Endothelial cell of umbilical vein (primary cell): ENCODE measurements at regions of chr9 and their contacts with region 1.

Region 1: GRCh38 chr9:127049044-127049443 is 73.4 kb downstream of the ANGPTL2 start:
- DNase-seq: peak; percentile 98
- H3K4me3 ChIP-seq: no peak overlapping the region
- H3K27ac ChIP-seq: peak overlapping the region; percentile 80
- H3K4me1 ChIP-seq: peaks cover 40% of the 10 kb centered on the region
- H3K27me3 ChIP-seq: no peaks in the 10 kb centered on the region
- CTCF ChIP-seq: peak; percentile 19 to 22
- POLR2A ChIP-seq: peak; percentile 58

Region 2: DNA sequence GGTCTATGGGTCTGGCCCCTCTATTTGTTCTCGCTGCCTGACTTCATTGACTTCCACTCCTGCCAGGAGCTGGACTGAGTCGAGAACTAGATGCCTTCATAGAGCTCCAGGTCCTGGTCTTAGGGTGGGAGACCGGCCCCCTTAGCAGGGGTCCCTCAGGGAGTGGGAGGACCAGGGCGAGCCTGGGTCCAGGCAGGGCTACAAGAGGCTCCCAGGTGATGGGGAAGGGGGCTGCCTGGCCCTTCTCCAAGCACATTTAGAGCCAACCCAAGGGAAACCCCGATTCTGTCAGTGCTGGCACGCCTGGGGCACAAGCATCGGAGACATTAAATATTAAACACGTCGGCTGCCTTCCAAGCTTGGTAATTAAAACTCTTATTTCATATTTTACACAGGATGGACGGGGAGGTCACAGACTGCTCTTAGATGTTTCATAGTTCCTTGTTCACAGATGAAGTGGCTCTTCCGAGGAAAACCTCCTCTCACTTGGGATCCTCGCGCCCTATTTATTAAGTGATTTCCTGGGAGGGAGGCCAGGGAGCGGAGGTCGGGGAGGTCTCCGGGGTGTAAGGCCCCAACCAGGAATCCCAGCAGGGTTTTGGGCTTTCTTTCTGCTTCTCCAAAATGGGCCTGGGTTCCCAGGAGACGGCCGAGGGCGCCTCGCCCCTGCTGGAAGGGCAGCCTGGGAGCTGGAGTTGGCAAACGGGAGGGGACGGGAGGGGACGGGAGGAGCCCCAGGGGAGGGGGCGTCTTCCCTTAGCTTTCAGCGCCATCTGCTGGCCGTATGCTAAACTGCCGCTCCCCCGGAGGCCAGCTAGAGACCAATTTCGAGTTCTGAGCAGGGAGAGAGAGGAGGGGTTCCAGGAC is 267.6 kb before region 1 on chr9:
- CTCF ChIA-PET with region 1: no interaction called
- POLR2A ChIA-PET with region 1: no interaction called
- dilution Hi-C with region 1: no loop called
- intact Hi-C with region 1: no loop called
- DNase-seq: peak; percentile 69
- H3K4me3 ChIP-seq: no peak overlapping the region
- H3K27ac ChIP-seq: no peak overlapping the region
- H3K4me1 ChIP-seq: no peaks in the 10 kb centered on the region
- H3K27me3 ChIP-seq: peaks cover under 1% of the 10 kb centered on the region in 2 experiments
- CTCF ChIP-seq: peak; percentile 78 to 90
- POLR2A ChIP-seq: no peak

Region 3: DNA sequence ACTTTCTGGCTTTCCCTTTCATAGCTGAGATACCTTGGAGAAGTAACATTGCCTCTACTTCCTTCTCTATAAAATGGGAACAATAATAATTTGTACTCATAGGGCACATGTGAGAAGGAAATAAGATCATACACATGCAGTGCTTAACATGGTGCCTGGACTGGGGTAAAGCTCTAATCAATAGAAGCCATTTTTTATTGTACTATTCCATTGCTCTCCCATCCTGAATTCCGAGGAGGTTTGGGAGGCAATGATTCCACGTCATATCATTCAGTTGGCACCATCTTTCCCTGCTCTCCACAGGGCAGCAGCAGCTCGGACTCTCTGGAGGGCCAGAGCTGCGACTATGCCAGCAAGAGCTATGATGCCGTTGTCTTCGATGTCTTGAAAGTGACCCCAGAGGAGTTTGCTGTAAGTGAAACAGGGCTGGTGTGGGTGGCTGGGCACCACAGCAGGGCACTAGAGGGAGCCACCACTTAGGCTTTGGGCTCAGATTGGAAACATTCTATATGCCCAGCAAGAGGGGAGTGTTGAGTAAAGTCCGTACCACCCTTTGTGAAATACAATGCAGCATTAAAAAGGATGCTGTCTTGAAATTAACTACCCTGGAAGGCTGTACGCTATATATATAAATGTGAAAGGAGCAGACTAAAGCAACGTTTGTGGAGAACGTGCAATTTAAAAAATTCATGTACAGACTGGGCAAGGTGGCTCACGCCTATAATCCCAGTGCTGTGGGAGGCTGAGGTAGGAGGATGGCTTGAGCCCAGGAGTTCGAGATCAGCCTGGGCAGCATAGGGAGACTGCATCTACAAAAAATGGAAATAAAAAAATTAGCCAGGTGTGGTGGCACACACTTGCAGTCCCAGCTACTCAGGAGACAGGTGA is 83.3 kb before region 1 on chr9:
- CTCF ChIA-PET with region 1: interaction called, 18 read pairs
- POLR2A ChIA-PET with region 1: no interaction called
- dilution Hi-C with region 1: no loop called
- intact Hi-C with region 1: loop called (anchors 5 kb)
- DNase-seq: peak; percentile 82
- H3K4me3 ChIP-seq: no peak overlapping the region
- H3K27ac ChIP-seq: no peak overlapping the region
- H3K4me1 ChIP-seq: peaks cover 1% of the 10 kb centered on the region
- H3K27me3 ChIP-seq: no peaks in the 10 kb centered on the region
- CTCF ChIP-seq: peak; percentile 81 to 88
- POLR2A ChIP-seq: no peak

Region 4: GRCh38 chr9:127035951-127036350 is 13.1 kb before region 1 on chr9:
- CTCF ChIA-PET with region 1: interaction called, 26 read pairs
- POLR2A ChIA-PET with region 1: no interaction called
- dilution Hi-C with region 1: no loop called
- intact Hi-C with region 1: no loop called
- DNase-seq: peak; percentile 80
- H3K4me3 ChIP-seq: no peak overlapping the region
- H3K27ac ChIP-seq: no peak overlapping the region
- H3K4me1 ChIP-seq: no peaks in the 10 kb centered on the region
- H3K27me3 ChIP-seq: no peaks in the 10 kb centered on the region
- CTCF ChIP-seq: no peak
- POLR2A ChIP-seq: no peak

Region 5: DNA sequence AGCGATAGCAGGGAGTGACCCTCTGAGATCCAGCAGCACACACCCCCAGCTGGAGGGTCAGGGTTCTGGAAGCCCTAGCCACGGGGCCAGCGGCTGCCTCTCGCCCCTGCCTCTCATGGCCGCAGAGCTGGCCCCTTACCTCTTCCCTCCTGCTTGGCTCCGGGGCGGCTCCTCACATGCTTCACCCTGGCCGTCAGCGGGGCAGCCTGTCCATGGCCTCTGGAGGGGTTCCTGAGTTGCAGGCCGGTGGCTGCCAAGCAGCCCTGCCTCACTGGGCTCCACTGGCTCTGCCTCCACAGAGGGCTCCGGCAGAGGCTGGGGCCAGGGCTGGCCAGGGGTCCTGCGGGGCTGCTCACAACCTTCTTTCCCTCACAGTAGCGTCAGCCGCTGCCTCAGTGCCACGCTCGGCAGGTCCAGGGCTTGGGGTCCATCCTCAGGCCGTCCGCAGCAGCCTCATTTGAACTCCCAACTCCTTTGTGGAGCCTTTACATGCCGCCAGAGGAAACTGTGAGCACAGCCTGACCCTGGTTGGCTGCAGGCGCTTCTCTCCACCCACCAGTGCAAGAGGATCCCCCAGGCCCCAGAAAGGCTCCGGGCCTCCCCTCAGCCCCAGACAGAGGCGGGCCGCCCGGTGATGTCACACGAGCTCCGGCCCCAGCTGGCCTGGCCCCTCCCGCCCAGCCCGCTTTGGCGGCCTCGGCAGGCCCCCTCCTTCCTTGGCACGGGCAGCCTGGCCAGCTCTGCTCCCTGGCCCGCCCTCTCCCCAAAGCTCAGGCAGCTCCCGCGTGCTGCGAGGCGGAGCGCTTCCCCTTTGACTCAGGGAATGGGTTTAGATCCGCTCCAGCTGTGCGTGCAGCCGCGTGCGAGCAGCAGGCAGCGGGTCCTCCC is 73.4 kb after region 1 on chr9 and contains the start of gene ANGPTL2:
- CTCF ChIA-PET with region 1: interaction called, 6 read pairs
- POLR2A ChIA-PET with region 1: no interaction called
- dilution Hi-C with region 1: no loop called
- intact Hi-C with region 1: loop called (anchors 1 kb)
- DNase-seq: peak; percentile 94
- H3K4me3 ChIP-seq: peak within 1 kb of the TSS; percentile 30 to 64 (median 53)
- H3K27ac ChIP-seq: peak within 1 kb of the TSS; percentile 70
- H3K4me1 ChIP-seq: peaks cover 16% of the 10 kb centered on the region
- H3K27me3 ChIP-seq: peaks cover 1 to 2% of the 10 kb centered on the region in 2 experiments
- CTCF ChIP-seq: peak in 1 of 2 donors; percentile 5
- POLR2A ChIP-seq: peak; percentile 70
- total RNA-seq, gene ANGPTL2: 21.8 and 24.5 TPM in 2 replicates

Region 6: GRCh38 chr9:127187231-127187956 is 138.3 kb after region 1 on chr9:
- CTCF ChIA-PET with region 1: interaction called, 4 read pairs
- POLR2A ChIA-PET with region 1: no interaction called
- dilution Hi-C with region 1: no loop called
- intact Hi-C with region 1: loop called (anchors 2 kb)
- DNase-seq: peak; percentile 95
- H3K4me3 ChIP-seq: no peak overlapping the region
- H3K27ac ChIP-seq: peak overlapping the region; percentile 84
- H3K4me1 ChIP-seq: peaks cover 22% of the 10 kb centered on the region
- H3K27me3 ChIP-seq: no peaks in the 10 kb centered on the region
- CTCF ChIP-seq: no peak
- POLR2A ChIP-seq: no peak

Region 7: GRCh38 chr9:127336738-127337251 is 287.8 kb after region 1 on chr9:
- CTCF ChIA-PET with region 1: no interaction called
- POLR2A ChIA-PET with region 1: no interaction called
- dilution Hi-C with region 1: no loop called
- intact Hi-C with region 1: loop called (anchors 2 kb)
- DNase-seq: peak; percentile 98
- H3K4me3 ChIP-seq: peak overlapping the region in 1 of 3 experiments; percentile 16
- H3K27ac ChIP-seq: peak overlapping the region; percentile 99
- H3K4me1 ChIP-seq: peaks cover 40% of the 10 kb centered on the region
- H3K27me3 ChIP-seq: no peaks in the 10 kb centered on the region
- CTCF ChIP-seq: no peak
- POLR2A ChIP-seq: peak; percentile 56

Region 8: DNA sequence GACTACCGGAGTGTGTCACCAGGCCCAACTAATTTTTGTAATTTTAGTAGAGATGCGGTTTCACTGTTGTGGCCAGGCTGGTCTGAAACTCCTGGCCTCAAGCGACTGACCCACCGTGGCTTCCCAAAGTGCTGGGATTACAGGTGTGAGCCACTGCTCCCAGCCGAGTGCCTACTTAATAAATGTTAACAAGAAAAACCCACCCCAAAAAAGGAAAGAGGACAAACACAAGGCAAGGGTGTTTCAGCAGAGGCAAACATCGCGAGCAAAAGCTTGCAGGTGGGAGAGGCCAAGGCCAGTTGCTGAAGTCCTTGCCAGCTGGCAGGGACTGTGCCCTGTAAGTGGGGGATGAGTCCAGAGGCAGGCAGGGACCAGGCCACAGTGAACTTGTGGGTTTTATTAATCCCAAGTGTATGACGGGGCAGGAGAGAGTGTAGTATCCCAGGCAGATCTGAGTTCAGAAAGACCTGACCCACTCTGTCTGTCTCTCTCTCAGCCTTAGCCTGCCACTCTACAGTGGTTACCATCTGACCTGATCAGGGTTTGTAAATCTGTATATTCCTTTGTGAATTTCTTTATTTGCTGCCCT is 747.3 kb after region 1 on chr9:
- CTCF ChIA-PET with region 1: no interaction called
- POLR2A ChIA-PET with region 1: no interaction called
- dilution Hi-C with region 1: no loop called
- intact Hi-C with region 1: no loop called
- DNase-seq: no peak
- H3K4me3 ChIP-seq: no peak overlapping the region
- H3K27ac ChIP-seq: no peak overlapping the region
- H3K4me1 ChIP-seq: peaks cover 14% of the 10 kb centered on the region
- H3K27me3 ChIP-seq: no peaks in the 10 kb centered on the region
- CTCF ChIP-seq: no peak
- POLR2A ChIP-seq: peak; percentile 21